Common myeloid progenitor, CD34-positive (primary cell): ENCODE measurements at regions of chr12 and their contacts with region 1.

Region 1: DNA sequence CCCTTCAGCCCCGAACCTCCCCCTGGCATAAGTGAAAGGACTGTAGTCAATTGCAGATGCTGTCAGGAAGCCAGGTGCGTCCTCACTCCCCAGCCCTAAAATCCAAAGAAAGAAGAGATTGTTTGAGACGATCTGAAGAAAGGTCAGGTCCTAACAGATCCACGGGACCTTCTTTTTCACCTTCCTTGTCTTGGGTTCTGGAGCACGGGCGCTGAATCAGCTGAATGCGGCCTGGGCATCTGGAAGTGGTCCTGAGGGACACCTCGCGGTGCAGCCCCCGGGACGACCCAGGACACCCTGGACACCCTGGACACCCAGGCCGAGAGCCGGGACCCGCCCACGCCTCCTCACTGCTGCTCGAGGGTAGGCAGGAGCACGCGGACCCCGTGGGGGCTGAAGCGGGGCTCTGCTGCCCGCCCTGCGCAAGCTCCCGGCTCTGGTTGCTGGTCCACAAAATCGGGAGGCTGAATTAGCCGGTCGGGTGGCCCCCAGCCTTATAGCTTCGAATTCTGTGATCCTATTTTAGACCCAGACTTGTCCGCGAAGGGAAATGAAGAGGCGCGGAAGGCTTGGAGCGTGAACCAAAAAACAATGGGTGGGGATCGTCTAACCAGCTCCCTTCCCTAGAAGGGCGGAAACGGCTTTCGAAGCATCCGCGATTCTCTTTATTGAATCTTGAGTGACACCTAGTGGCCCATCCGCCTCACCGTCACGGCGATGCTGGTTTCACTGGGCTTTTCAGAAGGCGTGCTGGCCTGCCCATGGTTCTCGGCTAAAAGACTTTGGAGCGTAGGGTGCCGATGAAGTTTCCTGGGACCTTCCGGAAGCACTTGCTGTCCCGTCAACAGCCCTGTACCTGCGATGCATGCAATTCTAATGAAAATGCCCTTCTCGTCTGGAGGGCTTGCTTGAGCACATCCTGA is 46.4 kb upstream of the PLXNC1 start:
- DNase-seq: peak; percentile 86 to 90 (median 87)
- H3K4me3 ChIP-seq: peak overlapping the region; percentile 35 to 81 (median 69)
- H3K27ac ChIP-seq: no peak overlapping the region
- H3K4me1 ChIP-seq: peaks cover 6 to 36% (median 34%) of the 10 kb centered on the region in 4 experiments
- H3K27me3 ChIP-seq: no peaks in the 10 kb centered on the region

Region 2: DNA sequence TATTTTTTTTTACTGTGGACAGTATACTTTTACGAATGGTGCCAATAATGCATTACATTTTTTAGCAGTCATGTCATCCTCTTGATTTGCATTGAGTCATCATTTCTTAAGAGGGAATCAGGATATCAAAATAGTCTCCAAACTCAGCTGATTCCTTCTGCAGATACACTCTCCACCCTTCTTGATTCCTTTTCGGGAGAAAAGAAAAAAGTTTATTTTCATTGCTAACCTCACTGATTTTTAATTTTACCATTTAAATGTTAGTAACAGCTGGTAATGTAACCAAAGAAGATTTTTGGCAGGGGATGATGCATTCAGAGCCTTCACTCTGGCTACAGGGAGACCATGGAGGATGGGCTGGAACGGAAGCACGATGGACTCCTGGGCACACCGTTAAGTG is 587.1 kb before region 1 on chr12:
- CTCF ChIA-PET with region 1: interaction called, 169 read pairs
- POLR2A ChIA-PET with region 1: no interaction called
- DNase-seq: no peak
- H3K4me3 ChIP-seq: no peak overlapping the region
- H3K27ac ChIP-seq: no peak overlapping the region
- H3K4me1 ChIP-seq: no peaks in the 10 kb centered on the region
- H3K27me3 ChIP-seq: no peaks in the 10 kb centered on the region

Region 3: DNA sequence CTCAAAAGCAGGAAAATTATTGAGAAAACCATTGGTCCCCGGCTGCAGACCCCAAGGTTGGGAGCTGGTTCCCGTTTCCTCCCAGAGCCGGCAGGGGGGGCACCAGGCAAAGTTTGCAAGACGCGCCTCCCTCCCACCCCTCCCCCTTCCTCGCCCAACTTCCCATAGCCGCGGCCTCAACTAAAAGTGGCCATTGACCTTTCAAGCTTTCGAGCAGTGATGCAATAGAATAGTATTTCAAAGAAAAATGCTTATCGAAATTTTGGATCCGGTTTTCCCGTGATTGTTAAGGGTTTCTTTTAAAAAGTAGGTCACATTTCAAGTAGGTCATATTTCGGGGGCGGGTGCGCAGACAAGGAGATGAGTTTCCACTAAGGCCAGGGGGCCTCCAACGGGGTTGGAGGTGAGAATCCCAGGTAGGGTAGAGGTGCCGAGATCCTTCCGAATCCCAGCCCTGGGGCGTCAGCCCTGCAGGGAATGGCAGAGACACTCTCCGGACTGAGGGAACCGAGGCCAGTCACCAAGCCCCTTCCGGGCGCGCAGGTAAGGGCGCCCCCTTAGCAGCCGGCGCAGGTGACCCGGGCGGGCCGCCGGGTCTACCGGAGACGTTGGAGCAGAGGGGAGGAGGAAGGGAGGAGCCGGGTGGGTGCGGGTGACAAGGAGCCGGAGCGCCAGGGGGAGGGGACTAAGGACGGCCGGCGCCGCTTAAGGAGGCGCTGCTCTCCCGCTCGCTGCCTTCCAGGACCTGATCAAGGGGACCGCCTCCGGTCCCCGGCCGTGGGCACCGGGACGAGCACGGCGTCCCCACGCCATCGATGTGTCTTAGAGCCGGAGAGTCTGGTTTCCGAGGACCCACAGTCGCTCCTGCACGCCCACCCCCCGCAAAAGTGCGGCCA is 532.1 kb before region 1 on chr12:
- CTCF ChIA-PET with region 1: interaction called, 85 read pairs
- POLR2A ChIA-PET with region 1: interaction called, 6 read pairs
- DNase-seq: peak; percentile 86 to 88 (median 87)
- H3K4me3 ChIP-seq: peak overlapping the region; percentile 79 to 96 (median 87)
- H3K27ac ChIP-seq: peak overlapping the region; percentile 58 to 85
- H3K4me1 ChIP-seq: peaks cover 3 to 39% (median 25%) of the 10 kb centered on the region in 4 experiments
- H3K27me3 ChIP-seq: no peaks in the 10 kb centered on the region

Region 4: DNA sequence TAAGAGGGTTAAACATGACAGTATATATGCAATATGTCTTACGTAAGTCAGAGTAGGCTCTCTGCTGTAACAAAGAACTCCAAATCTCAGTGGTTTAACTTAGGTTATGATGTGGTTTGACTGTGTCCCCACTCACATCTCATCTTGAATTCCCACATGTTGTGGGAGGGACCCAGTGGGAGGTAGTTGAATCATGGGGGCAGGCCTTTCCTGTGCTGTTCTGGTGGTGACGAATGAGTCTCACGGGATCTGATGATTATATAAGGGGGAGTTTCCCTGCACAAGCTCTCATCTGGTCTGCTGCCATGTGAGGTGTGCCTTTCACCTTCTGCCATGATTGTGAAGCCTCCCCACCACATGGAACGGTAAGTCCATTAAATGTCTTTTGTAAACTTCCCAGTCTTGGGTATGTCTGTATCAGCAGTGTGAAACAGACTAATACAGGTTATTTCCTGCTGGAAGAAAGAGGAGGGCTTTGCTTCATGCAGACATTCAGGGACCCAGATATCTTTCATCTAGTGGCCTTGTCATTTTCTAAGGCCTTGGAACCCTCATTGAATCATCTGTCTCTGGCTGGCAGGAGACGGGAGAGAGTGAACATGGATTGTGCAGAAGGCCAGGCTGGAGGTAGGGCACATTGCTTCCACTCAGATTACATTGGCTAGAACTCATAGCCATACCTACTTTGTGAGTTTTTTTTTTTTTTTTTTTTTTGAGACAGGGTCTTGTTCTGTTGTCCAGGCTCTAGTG is 328.7 kb before region 1 on chr12:
- CTCF ChIA-PET with region 1: interaction called, 47 read pairs
- POLR2A ChIA-PET with region 1: no interaction called
- DNase-seq: peak in 2 of 3 donors; percentile 73 to 84
- H3K4me3 ChIP-seq: no peak overlapping the region
- H3K27ac ChIP-seq: no peak overlapping the region
- H3K4me1 ChIP-seq: peaks cover 12 to 42% (median 25%) of the 10 kb centered on the region in 4 experiments
- H3K27me3 ChIP-seq: no peaks in the 10 kb centered on the region

Region 5: GRCh38 chr12:93908846-93909567 is 193.0 kb before region 1 on chr12:
- CTCF ChIA-PET with region 1: no interaction called
- POLR2A ChIA-PET with region 1: no interaction called
- DNase-seq: no peak
- H3K4me3 ChIP-seq: no peak overlapping the region
- H3K27ac ChIP-seq: no peak overlapping the region
- H3K4me1 ChIP-seq: no peaks in the 10 kb centered on the region
- H3K27me3 ChIP-seq: no peaks in the 10 kb centered on the region

Region 6: DNA sequence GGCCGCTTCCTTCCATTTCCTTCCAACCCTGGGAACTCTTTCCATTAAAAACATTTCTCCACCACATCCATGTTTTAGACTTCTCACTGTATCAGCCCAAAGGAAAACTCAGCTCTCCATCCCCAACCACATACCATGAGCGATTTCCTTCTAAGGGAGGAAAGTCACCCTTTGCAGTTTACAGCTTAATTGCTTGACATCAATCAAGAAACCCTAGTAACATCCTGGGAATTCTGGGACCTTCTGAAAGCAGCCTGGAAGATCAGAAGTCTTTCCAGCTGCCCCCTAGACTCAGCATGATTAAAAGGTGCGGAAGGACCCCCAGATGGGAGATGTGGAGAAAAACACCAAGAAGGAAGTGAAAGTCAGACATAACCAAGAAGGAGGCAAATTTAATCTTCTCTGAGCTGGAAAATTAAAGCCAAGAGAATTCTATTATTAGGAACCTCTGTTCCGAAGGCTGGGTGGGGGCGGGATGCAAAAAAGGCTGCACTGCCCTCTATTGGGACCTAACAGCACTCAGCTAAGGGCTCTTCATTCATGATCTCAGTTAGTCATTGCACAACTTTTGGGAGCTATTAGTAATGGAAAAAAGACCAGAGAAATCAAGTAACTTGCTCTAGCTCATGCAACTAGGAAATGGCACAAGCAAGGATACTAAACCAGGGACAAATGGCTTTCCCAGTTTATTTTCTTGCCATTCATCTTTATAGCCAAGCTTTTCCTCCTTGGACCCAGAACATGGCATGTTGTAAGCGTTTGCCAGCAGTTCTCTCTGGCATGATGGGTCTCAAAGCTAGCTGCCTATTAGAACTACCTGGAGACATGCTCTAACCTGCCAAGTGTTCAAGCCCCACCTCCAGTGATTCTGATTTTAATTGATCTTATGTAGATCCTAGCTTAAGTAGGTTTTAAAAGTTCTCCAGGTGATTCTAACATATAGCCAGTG is 26.7 kb before region 1 on chr12:
- CTCF ChIA-PET with region 1: interaction called, 80 read pairs
- POLR2A ChIA-PET with region 1: interaction called, 3 read pairs
- DNase-seq: peak; percentile 47 to 56 (median 54)
- H3K4me3 ChIP-seq: no peak overlapping the region
- H3K27ac ChIP-seq: no peak overlapping the region
- H3K4me1 ChIP-seq: peaks cover 2 to 45% (median 22%) of the 10 kb centered on the region in 4 experiments
- H3K27me3 ChIP-seq: no peaks in the 10 kb centered on the region

Region 7: GRCh38 chr12:94126067-94126466 is 24.1 kb after region 1 on chr12:
- CTCF ChIA-PET with region 1: interaction called, 20 read pairs
- POLR2A ChIA-PET with region 1: no interaction called
- DNase-seq: peak in 1 of 3 donors; percentile 40
- H3K4me3 ChIP-seq: no peak overlapping the region
- H3K27ac ChIP-seq: no peak overlapping the region
- H3K4me1 ChIP-seq: peaks cover 41 to 62% (median 52%) of the 10 kb centered on the region in 4 experiments
- H3K27me3 ChIP-seq: no peaks in the 10 kb centered on the region

Region 8: GRCh38 chr12:94204499-94205247 is 102.7 kb after region 1 on chr12:
- CTCF ChIA-PET with region 1: no interaction called
- POLR2A ChIA-PET with region 1: no interaction called
- DNase-seq: peak in 2 of 3 donors; percentile 29 to 44
- H3K4me3 ChIP-seq: no peak overlapping the region
- H3K27ac ChIP-seq: no peak overlapping the region
- H3K4me1 ChIP-seq: peaks cover 52 to 68% (median 57%) of the 10 kb centered on the region in 4 experiments
- H3K27me3 ChIP-seq: no peaks in the 10 kb centered on the region